ENCODE measurements at regions of chr22 and their contacts with region 1.

Region 1: GRCh38 chr22:23539135-23539838 is 40.8 kb downstream of the IGLL1 start:
- DNase-seq: peak; percentile 72 to 83 (median 76)
- ATAC-seq: peak; percentile 88 to 99 (median 98)
- H3K4me3 ChIP-seq: peak overlapping the region in 3 of 12 donors; percentile 3 to 25 (median 22)
- H3K27ac ChIP-seq: peak overlapping the region in 1 of 12 donors; percentile 39
- H3K4me1 ChIP-seq: peaks cover 0 to 17% (median 0%) of the 10 kb centered on the region in 12 donors
- H3K27me3 ChIP-seq: no peaks in the 10 kb centered on the region
- CTCF ChIP-seq: peak; percentile 76 to 91 (median 85)
- POLR2A ChIP-seq: no peak

Region 2: DNA sequence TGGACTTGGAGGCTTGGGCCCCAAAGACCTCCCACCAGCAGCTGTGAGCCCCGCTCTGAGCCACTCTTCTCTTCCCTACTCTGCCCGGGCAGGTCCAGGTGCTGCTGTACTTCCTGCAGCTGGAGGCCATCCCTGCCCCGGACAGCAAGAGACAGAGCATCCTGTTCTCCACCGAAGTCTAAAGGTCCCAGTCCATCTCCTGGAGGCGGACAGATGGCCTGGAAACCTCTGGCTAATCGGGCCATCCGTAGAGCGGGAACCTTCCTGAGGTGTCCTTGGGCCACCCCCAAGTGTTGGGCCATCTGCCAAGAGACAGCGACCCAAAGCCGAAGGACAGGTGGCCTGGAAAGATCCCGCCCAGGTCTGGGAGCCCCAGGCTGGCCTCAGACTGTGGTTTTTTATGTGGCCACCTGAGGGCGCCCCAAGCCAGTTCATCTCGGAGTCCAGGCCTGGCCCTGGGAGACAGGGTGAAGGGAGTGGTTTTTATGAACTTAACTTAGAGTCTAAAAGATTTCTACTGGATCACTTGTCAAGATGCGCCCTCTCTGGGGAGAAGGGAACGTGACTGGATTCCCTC is 223.9 kb before region 1 on chr22:
- intact Hi-C with region 1: loop called in 6 of 10 experiments (anchors 2 to 10 kb)
- DNase-seq: peak; percentile 32 to 82 (median 69)
- ATAC-seq: peak in 2 of 4 donors; percentile 24 to 34
- H3K4me3 ChIP-seq: no peak overlapping the region
- H3K27ac ChIP-seq: no peak overlapping the region
- H3K4me1 ChIP-seq: peaks cover 0 to 3% (median 0%) of the 10 kb centered on the region in 12 donors
- H3K27me3 ChIP-seq: no peaks in the 10 kb centered on the region
- CTCF ChIP-seq: peak; percentile 30 to 86 (median 66)
- POLR2A ChIP-seq: no peak

Region 3: DNA sequence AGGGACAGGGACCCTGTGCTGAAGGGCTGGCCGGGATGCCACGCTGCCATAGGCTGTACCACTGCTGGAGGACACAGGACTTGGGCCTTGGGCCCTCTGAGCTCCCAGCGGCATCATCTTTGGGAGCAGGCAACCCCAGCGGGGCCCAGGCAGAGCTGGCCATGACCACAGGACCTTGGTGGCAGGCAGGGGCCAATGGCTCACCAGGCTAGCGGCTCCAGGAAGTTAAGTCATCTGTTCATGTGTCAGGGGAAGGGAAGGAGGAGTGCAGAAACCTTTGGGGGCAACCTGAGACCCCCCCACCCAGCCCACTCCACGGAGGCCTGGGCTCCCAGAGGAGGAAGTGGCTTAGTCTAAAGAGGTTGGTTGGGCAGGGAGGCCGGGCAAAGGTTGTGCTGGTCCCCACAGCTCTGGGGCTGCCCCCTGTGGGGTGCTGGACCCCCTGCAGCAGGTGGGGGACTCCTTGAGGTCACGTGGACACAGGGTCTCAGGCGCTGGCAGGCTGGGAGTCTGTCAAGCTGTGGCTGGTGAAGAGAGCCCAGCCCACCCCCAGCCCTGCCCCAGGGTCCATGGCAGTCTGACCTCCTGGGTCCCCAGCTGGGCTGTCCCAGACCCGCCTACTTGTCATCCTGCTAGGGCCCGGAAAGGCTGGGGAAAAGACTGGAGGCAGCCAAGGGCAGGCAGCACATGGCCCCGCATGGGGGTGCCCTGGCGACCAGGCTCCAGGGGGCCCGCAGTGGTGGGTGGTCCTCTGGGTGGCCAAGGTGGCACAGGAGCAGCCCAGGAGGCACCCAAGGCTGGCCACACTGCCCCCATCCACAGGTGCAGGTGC is 143.5 kb before region 1 on chr22:
- intact Hi-C with region 1: loop called in 4 of 10 experiments (anchors 5 to 10 kb)
- DNase-seq: no peak
- ATAC-seq: no peak
- H3K4me3 ChIP-seq: no peak overlapping the region
- H3K27ac ChIP-seq: no peak overlapping the region
- H3K4me1 ChIP-seq: no peaks in the 10 kb centered on the region
- H3K27me3 ChIP-seq: no peaks in the 10 kb centered on the region
- CTCF ChIP-seq: no peak
- POLR2A ChIP-seq: no peak

Region 4: DNA sequence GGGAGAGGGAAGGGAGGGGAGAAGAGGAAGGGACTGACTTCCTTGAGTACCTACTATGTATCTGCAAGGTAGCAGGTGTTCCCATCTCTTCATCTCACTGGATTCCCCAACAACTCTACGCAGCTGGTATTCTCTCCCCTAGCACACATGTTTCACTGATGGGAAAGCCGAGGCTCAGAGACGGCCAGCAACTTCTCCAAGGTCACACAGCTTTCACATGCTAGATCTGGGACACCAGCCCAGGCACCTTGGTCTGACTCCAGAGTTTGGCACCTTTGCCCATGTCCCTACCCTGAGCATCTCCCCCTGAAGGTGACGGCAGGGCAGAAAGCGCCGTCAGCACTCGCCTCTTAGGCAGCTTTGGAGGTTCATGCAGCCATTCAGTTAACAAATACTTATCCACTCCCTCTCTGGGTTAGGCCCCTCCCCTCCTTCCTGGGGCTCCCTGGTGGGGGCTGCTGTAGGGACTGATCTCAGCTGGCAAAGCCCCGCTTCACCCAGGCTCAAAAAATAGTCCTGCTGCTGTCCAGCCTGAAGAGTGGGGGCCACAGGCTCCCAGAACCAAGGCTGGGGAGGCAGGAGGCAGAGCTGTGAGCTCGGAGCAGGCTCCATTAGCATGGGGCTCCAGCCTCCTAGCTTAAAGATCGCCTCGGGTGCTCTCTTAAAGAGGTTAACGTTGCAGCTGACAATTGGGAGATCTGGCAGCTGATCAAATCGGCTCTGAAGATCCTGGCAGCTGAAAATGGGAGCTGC is 38.6 kb before region 1 on chr22:
- intact Hi-C with region 1: no loop called
- DNase-seq: peak in 1 of 5 donors; percentile 32
- ATAC-seq: no peak
- H3K4me3 ChIP-seq: no peak overlapping the region
- H3K27ac ChIP-seq: no peak overlapping the region
- H3K4me1 ChIP-seq: peaks cover 0 to 12% (median 0%) of the 10 kb centered on the region in 12 donors
- H3K27me3 ChIP-seq: no peaks in the 10 kb centered on the region
- CTCF ChIP-seq: no peak
- POLR2A ChIP-seq: no peak

Region 5: DNA sequence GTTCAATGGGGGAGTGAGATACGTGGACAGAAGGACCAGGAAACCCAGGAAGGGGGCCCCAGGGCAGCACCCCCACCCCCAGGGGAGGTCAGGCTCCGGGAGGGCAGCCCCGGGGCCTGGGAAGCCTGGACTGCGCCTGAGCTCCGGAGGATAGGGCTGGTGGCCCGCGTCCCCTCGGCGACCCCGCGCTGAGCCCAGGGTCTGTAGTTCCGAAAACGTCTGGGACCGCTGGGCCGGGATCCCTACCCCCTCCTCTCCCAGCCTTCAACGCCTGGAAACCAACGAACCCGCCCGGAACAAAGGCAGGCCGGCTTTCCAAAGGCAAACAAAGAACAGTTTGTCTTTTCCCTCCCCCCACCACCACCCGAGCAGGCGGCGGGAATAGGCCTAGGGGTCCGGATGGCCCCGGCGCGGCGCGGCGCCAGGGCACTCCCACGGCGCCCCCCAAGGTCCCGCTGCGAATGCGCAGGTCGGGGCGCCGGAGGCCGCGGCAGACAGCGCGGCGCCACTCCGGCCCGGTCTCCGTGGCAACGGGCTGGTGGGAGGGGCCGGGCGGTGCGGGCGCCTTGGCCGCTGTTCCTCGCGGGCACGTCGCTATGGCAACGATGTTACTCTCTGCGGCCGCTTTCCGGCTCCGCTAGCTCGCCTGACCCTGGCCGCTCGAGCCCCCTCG is 17.7 kb before region 1 on chr22:
- intact Hi-C with region 1: loop called in 2 of 10 experiments (anchors 2 kb)
- DNase-seq: peak; percentile 91 to 95 (median 92)
- ATAC-seq: peak; percentile 83 to 96 (median 92)
- H3K4me3 ChIP-seq: peak overlapping the region; percentile 24 to 63 (median 55)
- H3K27ac ChIP-seq: peak overlapping the region; percentile 84 to 99 (median 92)
- H3K4me1 ChIP-seq: peaks cover 6 to 39% (median 21%) of the 10 kb centered on the region in 12 donors
- H3K27me3 ChIP-seq: peaks cover 0 to 3% (median 0%) of the 10 kb centered on the region in 9 donors
- CTCF ChIP-seq: peak in 6 of 12 donors; percentile 11 to 48 (median 35)
- POLR2A ChIP-seq: peak in 1 of 2 donors; percentile 71

Region 6: DNA sequence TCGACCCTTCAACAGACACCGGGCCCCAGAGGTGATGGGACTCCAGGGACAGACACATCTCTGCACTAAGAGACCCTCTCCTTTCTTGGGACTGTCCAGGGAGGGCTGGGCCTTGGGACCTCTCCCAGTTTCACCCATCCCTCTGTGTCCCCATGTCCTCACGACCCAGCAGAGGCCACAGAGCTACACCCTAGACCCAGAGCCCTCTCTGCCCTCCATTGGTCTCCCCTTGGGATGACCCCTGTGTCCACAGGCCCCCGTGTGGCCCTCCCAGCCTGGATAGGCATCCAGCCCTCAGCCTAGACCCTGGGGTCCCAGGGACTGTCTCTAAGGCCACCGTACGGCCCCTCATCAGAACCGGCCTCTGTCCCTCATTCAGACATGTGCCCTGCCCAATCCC is 100.4 kb after region 1 on chr22:
- intact Hi-C with region 1: no loop called
- DNase-seq: no peak
- ATAC-seq: peak in 1 of 4 donors; percentile 27
- H3K4me3 ChIP-seq: no peak overlapping the region
- H3K27ac ChIP-seq: no peak overlapping the region
- H3K4me1 ChIP-seq: no peaks in the 10 kb centered on the region
- H3K27me3 ChIP-seq: no peaks in the 10 kb centered on the region
- CTCF ChIP-seq: no peak
- POLR2A ChIP-seq: no peak

Region 7: DNA sequence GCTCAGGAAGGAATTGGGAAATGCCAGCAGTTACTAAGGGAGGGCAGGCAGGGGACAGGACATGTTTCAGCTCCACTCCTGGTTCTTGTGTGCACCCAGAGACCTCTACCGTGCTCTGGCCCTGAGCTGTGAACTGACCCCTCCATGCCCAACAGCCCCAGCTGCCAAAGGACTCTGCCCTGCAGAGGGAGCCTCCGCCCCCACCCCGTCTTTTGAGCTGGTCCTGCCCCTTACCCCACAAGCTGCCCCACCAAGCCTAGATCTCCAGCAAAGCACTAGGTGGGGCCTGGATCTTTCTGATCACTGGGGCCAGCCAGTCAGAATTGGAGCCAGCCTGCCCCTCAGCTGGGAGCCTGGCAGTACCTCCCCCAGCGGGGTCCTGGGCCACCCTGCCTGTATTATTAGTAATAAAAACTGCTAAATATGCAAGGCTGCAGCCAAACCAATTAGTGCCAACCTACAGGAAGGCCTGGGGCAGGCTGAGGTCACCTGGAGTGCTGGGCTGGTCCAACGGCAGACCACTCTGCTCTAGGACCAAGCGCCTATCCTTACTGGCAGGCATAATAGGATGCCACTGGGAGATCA is 116.7 kb after region 1 on chr22:
- intact Hi-C with region 1: no loop called
- DNase-seq: no peak
- ATAC-seq: no peak
- H3K4me3 ChIP-seq: no peak overlapping the region
- H3K27ac ChIP-seq: no peak overlapping the region
- H3K4me1 ChIP-seq: no peaks in the 10 kb centered on the region
- H3K27me3 ChIP-seq: no peaks in the 10 kb centered on the region
- CTCF ChIP-seq: no peak
- POLR2A ChIP-seq: no peak

Region 8: DNA sequence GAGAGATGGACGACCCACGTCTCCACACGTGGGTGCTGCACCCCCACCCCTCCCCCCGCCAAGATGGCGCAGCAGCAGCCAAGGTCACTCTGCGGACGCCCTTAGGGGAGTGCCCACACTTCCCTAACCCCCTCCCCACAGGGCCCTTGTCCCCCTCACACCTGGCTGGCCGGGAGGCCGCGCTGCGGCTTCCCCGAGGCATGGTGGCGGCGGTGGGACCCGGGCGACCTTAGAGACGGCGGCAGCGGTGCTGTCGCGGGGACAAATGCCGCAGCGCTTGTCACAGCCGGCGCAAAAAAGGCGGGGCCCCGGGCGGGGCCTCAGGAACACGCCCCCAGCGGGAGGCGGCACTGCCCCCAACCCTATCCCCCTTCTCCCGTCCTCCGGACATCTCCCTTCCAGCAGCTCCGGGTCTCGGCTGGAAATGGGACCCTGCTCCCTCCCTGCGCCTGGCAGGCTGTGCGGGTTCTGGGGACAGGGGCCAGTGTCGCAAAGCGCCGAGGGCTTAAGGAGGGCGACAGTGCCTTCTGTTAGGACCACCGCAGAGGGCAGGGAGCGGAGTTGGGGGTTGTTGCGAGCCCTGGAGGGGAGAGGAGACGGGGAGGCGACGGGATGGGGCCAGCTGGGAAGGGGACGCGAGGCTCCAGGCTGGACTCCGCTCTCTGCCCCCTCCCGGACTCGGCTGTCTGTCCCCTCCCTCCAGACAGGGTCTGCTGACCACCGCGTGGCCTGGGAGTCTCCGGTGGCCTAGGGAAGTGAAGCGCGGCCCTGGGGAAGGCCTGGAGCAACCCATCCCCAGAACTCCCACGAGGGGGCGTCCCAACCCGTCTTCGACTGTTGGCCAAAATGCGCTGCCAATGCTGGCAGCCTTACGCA is 228.6 kb after region 1 on chr22 and contains the start of gene CHCHD10:
- intact Hi-C with region 1: loop called in 3 of 10 experiments (anchors 10 kb)
- DNase-seq: peak; percentile 88 to 92 (median 90)
- ATAC-seq: peak; percentile 73 to 87 (median 82)
- H3K4me3 ChIP-seq: peak within 1 kb of the TSS; percentile 30 to 91 (median 66)
- H3K27ac ChIP-seq: peak within 1 kb of the TSS; percentile 82 to 97 (median 90)
- H3K4me1 ChIP-seq: peaks cover 0 to 70% (median 43%) of the 10 kb centered on the region in 12 donors
- H3K27me3 ChIP-seq: no peaks in the 10 kb centered on the region
- CTCF ChIP-seq: peak; percentile 73 to 92 (median 86)
- POLR2A ChIP-seq: peak; percentile 92 to 97
- total RNA-seq, gene CHCHD10: 374 to 1,458 (median 944) TPM

Measured in heart left ventricle (tissue), 16 donors.